Transverse colon (tissue), 4 donors: ENCODE measurements at regions of chr4 and their contacts with region 1.

Region 1: DNA sequence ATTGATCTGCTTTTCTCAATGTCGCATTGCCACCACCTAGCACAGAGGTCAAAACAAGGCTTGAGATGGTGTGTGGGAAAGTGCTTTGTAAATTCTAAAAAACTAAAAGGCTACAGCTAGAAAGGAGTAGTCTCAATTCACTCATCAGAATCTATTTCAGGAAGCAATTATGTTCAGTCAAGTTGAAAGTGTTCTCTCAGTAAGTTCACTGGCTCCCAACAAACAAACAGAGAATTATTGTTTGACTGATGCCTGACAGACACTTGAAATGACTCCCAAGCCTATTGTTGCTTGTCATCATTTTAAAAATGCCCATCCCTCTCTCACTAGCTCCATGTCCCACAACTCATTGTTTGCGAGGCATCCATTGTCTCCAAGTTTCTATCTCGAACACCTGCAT is 419.6 kb upstream of the CPEB2 start:
- DNase-seq: no peak
- H3K4me3 ChIP-seq: no peak overlapping the region
- H3K27ac ChIP-seq: no peak overlapping the region
- H3K4me1 ChIP-seq: no peaks in the 10 kb centered on the region
- H3K27me3 ChIP-seq: no peaks in the 10 kb centered on the region
- CTCF ChIP-seq: no peak
- EP300 ChIP-seq: no peak
- POLR2A ChIP-seq: no peak

Region 2: GRCh38 chr4:14552119-14552518 is 30.6 kb before region 1 on chr4:
- in situ Hi-C with region 1: no loop called
- intact Hi-C with region 1: loop called (anchors 1 kb)
- DNase-seq: no peak
- H3K4me3 ChIP-seq: no peak overlapping the region
- H3K27ac ChIP-seq: no peak overlapping the region
- H3K4me1 ChIP-seq: no peaks in the 10 kb centered on the region
- H3K27me3 ChIP-seq: no peaks in the 10 kb centered on the region
- CTCF ChIP-seq: no peak
- EP300 ChIP-seq: no peak
- POLR2A ChIP-seq: no peak